Activated CD4-positive, alpha-beta memory T cell treated with anti-CD3 and anti-CD28 coated beads, Interleukin-2, amount 10 ng/mL, durations not matched to agents 7 days and 5 days (primary cell): ENCODE measurements at regions of chr12 and their contacts with region 1.

Region 1: DNA sequence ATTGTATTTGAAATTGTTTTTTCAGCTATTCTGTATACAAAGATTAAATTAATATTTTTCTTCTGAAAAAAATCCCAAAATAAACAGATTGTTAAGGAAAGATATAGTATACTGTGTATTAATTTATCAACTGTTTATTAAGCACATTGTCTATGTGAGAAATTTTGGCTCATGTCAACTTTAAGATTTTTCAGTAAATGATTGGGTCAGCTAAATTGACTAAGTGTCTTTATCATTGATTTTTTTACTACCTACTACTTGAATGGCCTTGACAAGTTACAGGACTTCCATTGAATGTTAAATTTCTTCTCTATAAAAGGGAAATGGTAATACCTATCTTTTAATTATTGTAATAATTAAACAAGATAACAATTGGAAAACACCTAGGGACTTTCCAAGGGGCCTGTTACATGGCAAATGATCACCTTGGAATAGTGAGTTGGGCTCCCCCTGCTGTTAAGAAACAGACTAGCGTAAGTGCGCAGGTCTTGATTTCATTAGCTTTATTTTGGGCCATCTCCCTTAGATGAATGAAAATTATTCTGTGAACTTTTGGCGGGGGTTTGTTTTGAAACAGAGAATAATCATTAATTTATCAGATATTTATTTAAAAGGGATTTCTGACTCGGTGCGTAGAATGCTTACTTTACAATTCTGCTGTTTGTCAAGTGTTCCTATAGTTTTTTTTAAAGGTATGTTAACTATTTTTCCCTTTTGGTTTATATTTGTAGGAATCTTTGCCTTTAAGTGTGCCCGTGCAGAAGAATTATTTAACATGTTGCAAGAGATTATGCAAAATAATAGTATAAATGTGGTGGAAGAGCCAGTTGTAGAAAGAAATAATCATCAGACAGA is 14.5 kb upstream of the CCT2 start:
- DNase-seq: peak; percentile 49
- H3K4me3 Mint-ChIP-seq: no peak overlapping the region
- H3K27ac Mint-ChIP-seq: no peak overlapping the region
- H3K4me1 Mint-ChIP-seq: peaks cover 3% of the 10 kb centered on the region
- H3K27me3 Mint-ChIP-seq: no peaks in the 10 kb centered on the region

Region 2: GRCh38 chr12:69290545-69291277 is 280.1 kb before region 1 on chr12:
- CTCF ChIA-PET with region 1: interaction called, 38 read pairs
- POLR2A ChIA-PET with region 1: interaction called, 3 read pairs
- DNase-seq: peak; percentile 83
- H3K4me3 Mint-ChIP-seq: no peak overlapping the region
- H3K27ac Mint-ChIP-seq: no peak overlapping the region
- H3K4me1 Mint-ChIP-seq: peaks cover 5% of the 10 kb centered on the region
- H3K27me3 Mint-ChIP-seq: peaks cover 41% of the 10 kb centered on the region

Region 3: DNA sequence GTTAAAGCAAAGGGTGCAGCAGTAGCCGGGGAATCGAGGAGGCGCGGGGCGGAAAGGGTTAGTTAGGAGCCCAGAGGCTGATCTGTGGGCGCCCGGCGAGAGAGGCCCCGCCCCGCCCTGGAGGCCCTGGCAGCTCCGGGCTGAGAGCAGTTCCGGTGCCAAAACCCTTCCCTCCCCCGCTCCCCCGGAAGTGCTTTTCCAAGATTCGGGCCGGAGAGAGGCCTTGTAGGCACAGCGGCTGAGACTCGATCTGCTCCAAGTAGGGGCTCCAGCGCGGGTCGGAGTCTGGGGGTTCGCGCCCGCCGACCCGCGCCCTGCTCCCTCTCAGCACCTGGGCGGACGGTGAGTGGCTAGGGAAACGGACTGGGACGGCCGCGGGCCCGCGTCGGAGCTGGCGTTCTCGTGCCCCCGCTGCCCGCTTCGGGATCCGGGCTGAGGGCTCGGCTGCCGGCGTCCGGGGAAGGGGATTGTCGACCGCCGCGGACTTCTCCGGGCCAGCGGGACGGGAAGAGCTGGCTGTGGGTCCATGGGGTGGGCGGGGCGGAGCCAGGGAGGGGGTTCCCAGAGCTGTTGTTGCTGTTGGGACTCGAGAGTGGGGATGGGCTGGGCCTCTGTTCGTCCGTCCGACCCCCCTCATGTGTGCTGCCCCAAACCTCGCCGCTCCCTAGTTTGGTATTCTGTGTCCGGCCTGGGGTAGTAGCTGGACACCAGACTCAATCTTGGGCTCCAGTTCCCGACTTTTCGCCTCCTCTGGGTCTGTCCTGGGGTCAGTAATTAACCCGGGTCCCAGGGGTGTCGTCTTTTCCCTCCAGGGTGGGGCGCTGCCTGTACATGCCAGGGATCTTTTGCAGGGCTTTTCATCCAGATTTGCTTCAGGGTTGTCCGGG is 100.3 kb before region 1 on chr12 and contains the start of gene FRS2:
- CTCF ChIA-PET with region 1: interaction called, 15 read pairs
- POLR2A ChIA-PET with region 1: no interaction called
- DNase-seq: peak; percentile 87
- H3K4me3 Mint-ChIP-seq: peak within 1 kb of the TSS; percentile 96
- H3K27ac Mint-ChIP-seq: peak within 1 kb of the TSS; percentile 90
- H3K4me1 Mint-ChIP-seq: peaks cover 32% of the 10 kb centered on the region
- H3K27me3 Mint-ChIP-seq: no peaks in the 10 kb centered on the region
- total RNA-seq, gene FRS2: 12.8 to 15.1 TPM

Region 4: GRCh38 chr12:69585189-69586062 is 14.7 kb after region 1 on chr12 and contains the start of gene CCT2:
- CTCF ChIA-PET with region 1: interaction called, 20 read pairs
- POLR2A ChIA-PET with region 1: no interaction called
- DNase-seq: peak; percentile 96
- H3K4me3 Mint-ChIP-seq: peak within 1 kb of the TSS; percentile 94
- H3K27ac Mint-ChIP-seq: peak within 1 kb of the TSS; percentile 89
- H3K4me1 Mint-ChIP-seq: peaks cover 33% of the 10 kb centered on the region
- H3K27me3 Mint-ChIP-seq: no peaks in the 10 kb centered on the region
- total RNA-seq, gene CCT2: 131 to 135 TPM